Aorta (tissue), 5 donors: ENCODE measurements at regions of chr1 and their contacts with region 1.

Region 1: DNA sequence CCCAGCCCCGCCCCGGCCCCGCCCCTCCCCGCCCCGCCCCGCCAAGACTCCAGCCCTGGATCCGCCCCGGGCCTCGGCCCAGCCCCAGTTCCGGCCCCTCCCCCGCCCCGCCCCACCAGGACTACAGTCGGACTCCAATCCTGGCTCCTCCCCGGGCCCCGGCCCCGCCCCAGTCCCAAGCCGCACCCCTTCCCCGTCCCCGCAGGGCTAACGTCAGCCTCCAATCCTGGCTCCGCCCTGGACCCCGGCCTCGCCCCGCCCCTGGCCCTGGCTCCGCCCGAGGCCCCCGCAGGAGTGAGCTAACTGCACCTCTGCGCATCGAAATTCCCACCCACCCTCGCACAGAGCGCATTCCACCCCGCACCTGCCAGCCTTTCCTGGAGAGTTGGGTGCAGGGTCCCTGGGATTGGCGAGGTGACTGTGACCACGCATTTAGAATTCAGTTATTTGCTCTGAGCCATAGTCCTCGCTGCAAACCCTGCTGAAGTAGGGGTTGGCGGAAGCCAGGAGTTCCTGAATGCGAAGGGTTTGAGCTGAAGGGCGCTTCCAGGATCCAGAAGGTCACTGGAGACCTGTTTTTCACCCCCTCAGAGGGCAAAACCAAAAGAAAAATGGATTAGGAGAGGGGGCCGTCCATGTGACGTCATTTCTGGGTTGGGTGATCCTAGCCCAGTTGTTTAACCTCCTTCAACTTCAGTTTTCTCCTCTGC is 588 bp upstream of the IGSF8 start:
- DNase-seq: peak; percentile 99 to 100
- ATAC-seq: peak; percentile 93
- H3K4me3 ChIP-seq: peak overlapping the region in 1 of 2 donors; percentile 31
- H3K27ac ChIP-seq: peak overlapping the region; percentile 68 to 96
- H3K4me1 ChIP-seq: no peaks in the 10 kb centered on the region
- H3K27me3 ChIP-seq: no peaks in the 10 kb centered on the region

Region 2: DNA sequence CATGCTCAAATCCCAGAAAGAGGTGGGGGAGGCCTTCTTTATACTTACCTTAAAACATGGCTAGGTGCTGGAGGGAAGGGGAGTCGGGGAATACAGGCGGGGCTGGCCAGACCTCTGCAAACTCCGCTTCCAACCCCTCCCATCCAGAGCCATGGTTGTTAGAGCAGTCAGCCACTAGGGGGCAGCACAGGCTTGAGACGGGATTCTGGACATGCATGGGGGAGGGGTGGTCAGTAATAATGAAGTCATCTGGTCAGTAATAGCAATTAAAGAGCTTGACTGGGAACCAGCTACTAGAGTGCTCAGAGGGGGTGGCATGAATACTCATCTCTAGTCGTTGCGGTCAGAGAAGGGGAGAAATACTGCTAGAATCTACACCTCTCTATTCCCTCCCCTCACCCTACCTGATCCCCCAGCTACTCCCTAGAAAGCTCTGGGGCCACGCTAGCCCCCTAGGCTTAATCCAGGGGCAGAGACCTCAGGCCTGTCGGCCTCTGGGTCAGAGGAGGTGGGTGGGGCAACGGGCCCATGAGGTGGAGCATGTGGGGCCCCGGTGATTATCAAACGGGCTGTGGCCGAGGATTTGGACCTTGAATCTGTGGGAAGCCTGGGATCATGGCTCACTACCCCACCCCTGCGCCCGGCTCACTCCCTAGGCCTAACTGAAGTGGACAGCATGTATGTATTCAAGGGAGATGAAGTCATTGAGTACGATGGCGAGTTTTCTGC is 94.2 kb after region 1 on chr1:
- intact Hi-C with region 1: loop called (anchors 2 to 5 kb)
- DNase-seq: peak; percentile 83 to 95
- ATAC-seq: peak; percentile 92
- H3K4me3 ChIP-seq: no peak overlapping the region
- H3K27ac ChIP-seq: no peak overlapping the region
- H3K4me1 ChIP-seq: no peaks in the 10 kb centered on the region
- H3K27me3 ChIP-seq: no peaks in the 10 kb centered on the region

Region 3: DNA sequence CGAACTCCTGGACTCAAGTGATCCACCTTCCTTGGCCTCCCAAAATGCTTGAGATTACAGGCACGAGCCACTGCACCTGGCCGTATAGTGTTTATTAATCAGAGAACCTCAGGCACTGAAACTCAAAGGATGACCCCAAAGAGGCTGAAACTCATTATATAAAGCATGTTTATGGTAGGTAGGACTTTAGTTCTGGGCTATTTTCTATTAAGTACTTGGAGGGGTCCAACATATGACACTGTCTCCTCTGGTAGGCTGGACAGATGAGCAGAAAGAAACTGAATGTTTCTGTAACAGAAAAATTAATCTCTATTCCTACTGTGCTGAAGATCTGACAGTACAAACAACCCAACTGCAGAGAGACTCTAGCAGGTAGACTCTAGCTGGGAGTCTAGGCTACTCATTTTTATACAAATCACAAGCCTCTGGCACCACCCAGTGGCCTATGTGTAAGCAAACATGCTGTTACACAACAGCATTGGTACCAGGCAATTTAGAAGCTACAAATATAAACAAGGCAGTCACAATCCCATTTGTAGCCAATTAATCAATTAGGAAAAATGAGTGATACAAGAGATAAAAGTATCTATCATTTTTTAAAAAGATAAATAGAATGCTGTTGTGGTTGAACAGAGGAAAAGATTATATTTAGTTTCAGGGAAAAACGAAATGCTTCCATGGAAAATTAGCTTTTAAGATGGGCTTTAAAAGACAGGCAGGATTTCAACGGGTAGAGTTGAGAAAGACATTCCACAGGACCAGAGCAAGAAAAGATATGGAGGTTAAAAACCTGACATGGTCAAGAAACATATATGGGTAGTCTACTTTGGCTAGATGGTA is 152.9 kb after region 1 on chr1:
- intact Hi-C with region 1: loop called (anchors 1 to 5 kb)
- DNase-seq: peak in 1 of 2 donors; percentile 68
- ATAC-seq: peak; percentile 91
- H3K4me3 ChIP-seq: no peak overlapping the region
- H3K27ac ChIP-seq: no peak overlapping the region
- H3K4me1 ChIP-seq: no peaks in the 10 kb centered on the region
- H3K27me3 ChIP-seq: no peaks in the 10 kb centered on the region

Region 4: DNA sequence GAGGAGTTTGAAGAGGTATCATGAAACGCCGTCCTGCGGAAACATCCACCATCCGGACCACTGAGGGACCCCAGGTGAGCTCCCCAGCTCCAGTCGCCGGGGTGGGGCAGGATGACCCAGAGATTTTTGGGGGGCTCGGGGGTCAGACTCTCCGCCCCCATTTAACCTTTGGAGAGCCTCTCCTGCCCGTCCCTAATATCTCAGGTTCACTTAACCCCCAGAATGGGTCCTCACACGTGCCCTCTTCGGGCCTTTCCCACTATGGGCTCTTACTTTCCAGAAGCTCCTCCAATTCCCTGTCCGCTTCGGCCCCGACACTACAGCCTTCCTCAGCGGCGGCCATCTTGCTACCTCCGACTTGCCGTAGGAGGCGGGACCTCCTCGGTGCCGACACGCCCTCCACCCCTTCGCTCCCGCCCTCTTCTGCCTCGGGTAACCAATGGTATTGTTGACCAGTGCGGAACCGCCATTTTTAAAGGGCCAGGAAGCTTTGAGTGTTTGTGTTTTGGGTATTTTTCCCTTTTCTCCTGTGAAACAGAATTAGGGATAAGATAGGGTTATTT is 185.9 kb after region 1 on chr1 and contains the start of gene PEX19:
- intact Hi-C with region 1: loop called (anchors 2 to 5 kb)
- DNase-seq: peak; percentile 96 to 97
- ATAC-seq: peak; percentile 99
- H3K4me3 ChIP-seq: peak within 1 kb of the TSS; percentile 73 to 83
- H3K27ac ChIP-seq: peak within 1 kb of the TSS in 1 of 2 donors; percentile 58
- H3K4me1 ChIP-seq: peaks cover 0 to 7% of the 10 kb centered on the region in 2 donors
- H3K27me3 ChIP-seq: no peaks in the 10 kb centered on the region
- total RNA-seq, gene PEX19: 44.8 to 55.1 TPM